Colonic mucosa (tissue), 4 donors: ENCODE measurements at regions of chr6 and their contacts with region 1.

Region 1: GRCh38 chr6:130020907-130021629 is 2.7 kb downstream of the L3MBTL3 start:
- DNase-seq: peak; percentile 91
- H3K4me3 ChIP-seq: peak overlapping the region; percentile 78
- H3K27ac ChIP-seq: peak overlapping the region; percentile 79
- H3K4me1 ChIP-seq: no peaks in the 10 kb centered on the region
- H3K27me3 ChIP-seq: no peaks in the 10 kb centered on the region
- CTCF ChIP-seq: peak; percentile 63

Region 2: DNA sequence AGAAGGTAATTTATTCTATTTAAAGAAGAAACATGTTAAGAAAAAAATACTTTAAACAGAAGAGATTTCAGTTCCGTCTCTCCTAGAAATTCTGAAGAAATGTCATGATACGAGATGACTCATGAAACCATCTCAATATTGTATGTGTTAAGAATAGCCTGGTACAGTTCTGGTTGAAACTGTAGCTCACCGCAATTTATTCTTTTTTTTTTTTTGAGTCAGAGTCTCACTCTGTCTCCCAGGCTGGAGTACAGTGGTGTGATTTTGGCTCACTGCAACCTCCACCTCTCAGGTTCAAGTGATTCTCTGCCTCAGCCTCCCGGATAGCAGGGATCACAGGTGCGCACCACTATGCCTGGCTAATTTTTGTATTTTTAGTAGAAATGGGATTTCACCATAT is 414.4 kb before region 1 on chr6:
- intact Hi-C with region 1: loop called (anchors 10 kb)
- DNase-seq: no peak
- H3K4me3 ChIP-seq: no peak overlapping the region
- H3K27ac ChIP-seq: no peak overlapping the region
- H3K4me1 ChIP-seq: no peaks in the 10 kb centered on the region
- H3K27me3 ChIP-seq: no peaks in the 10 kb centered on the region
- CTCF ChIP-seq: no peak

Region 3: GRCh38 chr6:129774697-129775447 is 246.2 kb before region 1 on chr6:
- intact Hi-C with region 1: loop called (anchors 10 kb)
- DNase-seq: peak; percentile 86
- H3K4me3 ChIP-seq: no peak overlapping the region
- H3K27ac ChIP-seq: no peak overlapping the region
- H3K4me1 ChIP-seq: no peaks in the 10 kb centered on the region
- H3K27me3 ChIP-seq: no peaks in the 10 kb centered on the region
- CTCF ChIP-seq: peak; percentile 92

Region 4: DNA sequence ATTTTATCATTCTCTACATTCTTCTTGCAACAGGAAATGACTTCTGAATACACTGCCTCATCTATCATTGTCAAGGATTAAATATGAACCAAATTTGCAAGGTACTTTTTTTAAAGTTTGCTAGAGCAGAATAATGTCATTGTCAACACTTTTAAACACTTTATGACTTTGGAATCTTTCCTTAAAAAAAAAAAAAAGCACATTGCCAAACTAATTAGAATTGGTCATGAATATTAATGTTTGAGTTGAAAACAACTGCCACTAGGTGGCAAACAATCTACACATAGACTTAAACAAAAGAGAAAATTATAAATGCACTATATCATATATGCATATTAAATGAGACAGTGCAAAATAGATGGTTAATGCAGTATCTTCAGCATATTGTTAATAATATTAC is 127.4 kb before region 1 on chr6:
- intact Hi-C with region 1: loop called (anchors 10 kb)
- DNase-seq: no peak
- H3K4me3 ChIP-seq: no peak overlapping the region
- H3K27ac ChIP-seq: no peak overlapping the region
- H3K4me1 ChIP-seq: no peaks in the 10 kb centered on the region
- H3K27me3 ChIP-seq: no peaks in the 10 kb centered on the region
- CTCF ChIP-seq: no peak